Naive thymus-derived CD4-positive, alpha-beta T cell (primary cell): ENCODE measurements at regions of chr15 and their contacts with region 1.

Region 1: GRCh38 chr15:52568601-52569256 is at the start of gene ARPP19:
- DNase-seq: peak; percentile 58 to 81 (median 76)
- ATAC-seq: peak; percentile 83
- H3K4me3 ChIP-seq: peak within 1 kb of the TSS; percentile 75
- H3K4me3 Mint-ChIP-seq: peak within 1 kb of the TSS; percentile 89 to 100 (median 96)
- H3K27ac ChIP-seq: peak within 1 kb of the TSS; percentile 98
- H3K27ac Mint-ChIP-seq: peak within 1 kb of the TSS; percentile 95 to 100 (median 100)
- H3K4me1 ChIP-seq: peaks cover 13 to 25% of the 10 kb centered on the region in 2 donors
- H3K4me1 Mint-ChIP-seq: peaks cover 28 to 46% (median 42%) of the 10 kb centered on the region in 7 donors
- H3K27me3 ChIP-seq: no peaks in the 10 kb centered on the region
- H3K27me3 Mint-ChIP-seq: peaks cover 0 to 3% (median 0%) of the 10 kb centered on the region in 5 donors
- total RNA-seq, gene ARPP19: 94.9 to 148 (median 122) TPM

Region 2: GRCh38 chr15:52179278-52180195 is 389.2 kb before region 1 on chr15:
- CTCF ChIA-PET with region 1: no interaction called
- POLR2A ChIA-PET with region 1: no interaction called
- intact Hi-C with region 1: loop called (anchors 2 to 10 kb)
- DNase-seq: peak; percentile 79 to 92 (median 91)
- ATAC-seq: peak; percentile 91
- H3K4me3 ChIP-seq: peak overlapping the region; percentile 98
- H3K4me3 Mint-ChIP-seq: peak overlapping the region; percentile 86 to 100 (median 94)
- H3K27ac ChIP-seq: peak overlapping the region; percentile 95
- H3K27ac Mint-ChIP-seq: peak overlapping the region; percentile 90 to 99 (median 98)
- H3K4me1 ChIP-seq: peaks cover 19 to 20% of the 10 kb centered on the region in 2 donors
- H3K4me1 Mint-ChIP-seq: peaks cover 14 to 50% (median 40%) of the 10 kb centered on the region in 7 donors
- H3K27me3 ChIP-seq: no peaks in the 10 kb centered on the region
- H3K27me3 Mint-ChIP-seq: no peaks in the 10 kb centered on the region

Region 3: GRCh38 chr15:52331490-52332240 is 237.1 kb before region 1 on chr15:
- CTCF ChIA-PET with region 1: interaction called, 3 read pairs
- POLR2A ChIA-PET with region 1: no interaction called
- intact Hi-C with region 1: loop called (anchors 1 kb)
- DNase-seq: peak in 8 of 9 donors; percentile 43 to 70 (median 54)
- ATAC-seq: peak; percentile 97
- H3K4me3 ChIP-seq: no peak overlapping the region
- H3K4me3 Mint-ChIP-seq: peak overlapping the region in 8 of 10 donors; percentile 26 to 81 (median 54)
- H3K27ac ChIP-seq: no peak overlapping the region
- H3K27ac Mint-ChIP-seq: peak overlapping the region; percentile 53 to 92 (median 71)
- H3K4me1 ChIP-seq: peaks cover 10 to 11% of the 10 kb centered on the region in 2 donors
- H3K4me1 Mint-ChIP-seq: peaks cover 11 to 23% (median 19%) of the 10 kb centered on the region in 7 donors
- H3K27me3 ChIP-seq: no peaks in the 10 kb centered on the region
- H3K27me3 Mint-ChIP-seq: no peaks in the 10 kb centered on the region

Region 4: DNA sequence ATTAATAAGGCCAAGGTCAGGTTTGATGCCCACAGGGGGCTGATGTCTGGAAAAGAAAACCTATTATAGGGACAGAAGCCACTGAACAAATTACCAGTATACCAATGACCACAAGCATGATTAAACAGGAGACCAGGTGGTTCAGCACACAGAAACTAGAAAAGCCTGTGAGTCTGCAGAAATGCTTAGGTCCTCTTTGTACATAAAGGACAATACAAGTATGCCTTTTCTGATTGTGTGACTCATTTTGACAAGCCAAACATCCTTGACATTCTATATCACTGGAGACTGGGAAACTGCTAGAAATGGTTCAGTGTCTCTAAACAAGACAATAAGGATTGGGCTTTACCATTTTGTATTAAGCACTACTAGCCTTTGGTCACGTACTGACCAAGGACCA is 159.9 kb before region 1 on chr15:
- CTCF ChIA-PET with region 1: no interaction called
- POLR2A ChIA-PET with region 1: no interaction called
- intact Hi-C with region 1: no loop called
- DNase-seq: no peak
- ATAC-seq: no peak
- H3K4me3 ChIP-seq: no peak overlapping the region
- H3K4me3 Mint-ChIP-seq: no peak overlapping the region
- H3K27ac ChIP-seq: no peak overlapping the region
- H3K27ac Mint-ChIP-seq: no peak overlapping the region
- H3K4me1 ChIP-seq: no peaks in the 10 kb centered on the region
- H3K4me1 Mint-ChIP-seq: no peaks in the 10 kb centered on the region
- H3K27me3 ChIP-seq: no peaks in the 10 kb centered on the region
- H3K27me3 Mint-ChIP-seq: no peaks in the 10 kb centered on the region

Region 5: DNA sequence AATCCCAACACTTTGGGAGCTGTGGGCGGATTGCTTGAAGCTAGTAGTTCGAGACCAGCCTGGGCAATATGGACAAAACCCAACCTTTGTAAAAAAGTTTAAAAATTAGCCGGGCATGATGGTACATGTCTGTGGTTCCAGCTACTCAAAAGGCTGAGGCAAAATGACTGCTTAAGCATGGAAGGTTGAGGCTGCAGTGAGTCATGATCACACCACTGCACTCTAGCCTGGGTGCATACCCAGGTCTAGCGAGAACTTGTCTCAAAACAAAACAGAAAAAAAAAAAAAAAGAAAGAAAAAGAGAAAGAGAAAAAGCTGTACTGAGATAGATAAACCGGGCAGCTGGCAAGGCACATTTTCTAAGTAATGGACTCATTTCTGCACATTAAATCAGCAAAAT is 10.5 kb before region 1 on chr15:
- CTCF ChIA-PET with region 1: no interaction called
- POLR2A ChIA-PET with region 1: interaction called, 3 read pairs
- intact Hi-C with region 1: loop called in 1 of 2 experiments (anchors 1 kb)
- DNase-seq: peak in 1 of 9 donors; percentile 51
- ATAC-seq: peak; percentile 72
- H3K4me3 ChIP-seq: no peak overlapping the region
- H3K4me3 Mint-ChIP-seq: peak overlapping the region in 2 of 10 donors; percentile 33 to 48
- H3K27ac ChIP-seq: no peak overlapping the region
- H3K27ac Mint-ChIP-seq: peak overlapping the region in 3 of 9 donors; percentile 24 to 83 (median 82)
- H3K4me1 ChIP-seq: peaks cover 0 to 27% of the 10 kb centered on the region in 2 donors
- H3K4me1 Mint-ChIP-seq: peaks cover 30 to 78% (median 63%) of the 10 kb centered on the region in 7 donors
- H3K27me3 ChIP-seq: no peaks in the 10 kb centered on the region
- H3K27me3 Mint-ChIP-seq: no peaks in the 10 kb centered on the region

Region 6: GRCh38 chr15:52730173-52730572 is 161.4 kb after region 1 on chr15:
- CTCF ChIA-PET with region 1: interaction called, 4 read pairs
- POLR2A ChIA-PET with region 1: no interaction called
- intact Hi-C with region 1: loop called (anchors 1 to 10 kb)
- DNase-seq: peak in 7 of 9 donors; percentile 53 to 82 (median 75)
- ATAC-seq: peak; percentile 96
- H3K4me3 ChIP-seq: no peak overlapping the region
- H3K4me3 Mint-ChIP-seq: peak overlapping the region; percentile 10 to 69 (median 50)
- H3K27ac ChIP-seq: no peak overlapping the region
- H3K27ac Mint-ChIP-seq: peak overlapping the region; percentile 56 to 94 (median 87)
- H3K4me1 ChIP-seq: peaks cover 11 to 15% of the 10 kb centered on the region in 2 donors
- H3K4me1 Mint-ChIP-seq: peaks cover 6 to 31% (median 20%) of the 10 kb centered on the region in 7 donors
- H3K27me3 ChIP-seq: no peaks in the 10 kb centered on the region
- H3K27me3 Mint-ChIP-seq: no peaks in the 10 kb centered on the region